ENCODE measurements at regions of chr2 and their contacts with region 1.

Region 1: DNA sequence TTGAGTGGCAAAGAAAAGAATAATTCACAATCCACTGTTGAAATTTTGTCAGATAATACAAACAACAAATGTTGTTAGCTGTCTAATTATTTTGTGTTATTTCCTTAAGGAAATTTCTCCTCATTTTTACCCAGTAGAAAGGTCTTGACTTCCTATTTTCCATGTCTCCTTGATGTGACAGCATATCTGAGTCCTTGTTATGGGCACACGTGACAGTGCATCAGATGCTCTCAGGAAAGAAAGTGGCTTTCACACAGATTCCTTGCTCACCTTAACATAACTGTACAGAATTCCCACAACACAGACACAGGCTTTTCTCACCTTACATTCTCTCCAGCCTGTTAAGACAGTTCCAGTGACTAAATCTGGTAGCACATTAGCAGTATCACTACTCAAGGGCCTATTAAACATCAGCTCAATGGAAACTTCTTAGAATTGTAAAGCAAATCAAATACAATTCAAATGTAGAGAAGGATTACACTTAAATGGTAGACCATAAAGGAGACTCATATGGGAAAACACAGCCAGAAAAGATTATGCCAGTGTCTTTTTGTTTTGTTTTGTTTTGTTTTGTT is 30.2 kb upstream of the GPR55 start:
- DNase-seq: no peak

Region 2: DNA sequence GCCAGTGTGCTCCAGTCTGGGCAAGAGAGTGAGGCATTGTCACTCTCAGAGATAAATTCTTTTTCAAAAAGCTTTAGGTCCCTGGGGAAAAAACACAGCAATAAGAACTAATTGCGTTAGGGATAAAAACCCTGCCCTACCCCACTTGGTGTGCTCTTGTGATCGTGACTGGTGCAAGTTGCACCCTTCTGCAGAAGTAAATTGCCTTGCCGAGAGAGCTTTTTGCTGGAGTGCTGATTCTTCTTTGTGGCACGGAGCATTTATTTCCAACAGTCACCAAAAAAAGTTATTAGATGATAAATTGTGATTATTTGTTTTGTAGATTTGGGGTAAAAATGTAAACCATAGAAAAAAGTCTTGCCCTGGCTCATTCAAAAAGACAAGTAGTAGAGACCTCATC is 17.9 kb before region 1 on chr2:
- intact Hi-C with region 1: loop called in 1 of 2 experiments (anchors 1 kb)
- DNase-seq: no peak